CD8-positive, alpha-beta T cell (primary cell): ENCODE measurements at regions of chr13 and their contacts with region 1.

Region 1: DNA sequence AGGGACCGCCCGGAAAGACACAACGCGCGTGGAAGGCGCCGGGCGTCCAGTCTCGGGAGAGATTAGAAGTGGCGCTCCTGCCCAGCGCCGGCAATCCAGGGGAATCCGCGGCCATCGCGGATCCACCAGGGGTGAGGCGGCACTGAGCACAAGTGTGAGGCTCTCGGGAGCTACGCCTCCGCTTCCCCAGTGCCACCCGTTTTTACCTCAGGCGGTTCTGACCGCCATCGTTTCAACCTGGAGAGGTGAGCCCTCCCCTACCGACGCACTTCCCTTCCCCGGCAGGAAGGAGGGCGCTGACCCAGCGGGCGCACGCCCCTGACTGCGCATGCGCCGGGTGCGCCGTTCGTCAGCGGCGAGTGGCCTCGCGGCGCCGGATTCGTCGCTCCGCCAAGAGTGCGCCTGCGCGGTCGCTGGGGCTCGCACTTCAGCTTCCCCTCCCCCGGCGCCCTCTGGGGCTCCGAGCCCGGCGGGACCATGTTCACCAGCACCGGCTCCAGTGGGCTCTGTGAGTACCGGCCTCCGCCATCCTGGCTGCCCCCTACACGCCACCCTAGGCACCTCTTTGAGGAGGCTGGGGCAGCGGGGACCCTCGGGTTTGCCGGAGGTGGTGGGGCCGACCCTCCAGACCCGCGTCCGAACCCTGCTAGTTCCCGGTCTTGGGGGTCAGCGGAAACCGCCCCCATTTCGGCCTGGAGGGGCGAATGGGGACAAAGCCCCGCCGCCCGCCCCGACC is at the start of gene UBAC2:
- DNase-seq: peak; percentile 93 to 99 (median 97)
- ATAC-seq: peak; percentile 77
- H3K4me3 ChIP-seq: peak within 1 kb of the TSS; percentile 77 to 90
- H3K4me3 Mint-ChIP-seq: peak within 1 kb of the TSS; percentile 90
- H3K27ac ChIP-seq: peak within 1 kb of the TSS; percentile 98 to 99
- H3K27ac Mint-ChIP-seq: peak within 1 kb of the TSS; percentile 94
- H3K4me1 ChIP-seq: peaks cover 53% of the 10 kb centered on the region
- H3K4me1 Mint-ChIP-seq: peaks cover 69% of the 10 kb centered on the region
- H3K27me3 ChIP-seq: no peaks in the 10 kb centered on the region
- H3K27me3 Mint-ChIP-seq: no peaks in the 10 kb centered on the region
- CTCF ChIP-seq: no peak
- total RNA-seq, gene UBAC2: 62.0 to 63.0 TPM

Region 2: GRCh38 chr13:99176309-99177276 is 24.0 kb before region 1 on chr13:
- CTCF ChIA-PET with region 1: interaction called, 47 read pairs
- POLR2A ChIA-PET with region 1: interaction called, 5 read pairs
- intact Hi-C with region 1: loop called (anchors 1 to 2 kb)
- DNase-seq: peak; percentile 58 to 87 (median 82)
- ATAC-seq: peak; percentile 93
- H3K4me3 ChIP-seq: peak overlapping the region in 1 of 2 experiments; percentile 25
- H3K4me3 Mint-ChIP-seq: peak overlapping the region; percentile 72
- H3K27ac ChIP-seq: no peak overlapping the region
- H3K27ac Mint-ChIP-seq: peak overlapping the region; percentile 64
- H3K4me1 ChIP-seq: peaks cover 43% of the 10 kb centered on the region
- H3K4me1 Mint-ChIP-seq: peaks cover 45% of the 10 kb centered on the region
- H3K27me3 ChIP-seq: no peaks in the 10 kb centered on the region
- H3K27me3 Mint-ChIP-seq: no peaks in the 10 kb centered on the region
- CTCF ChIP-seq: peak; percentile 80

Region 3: DNA sequence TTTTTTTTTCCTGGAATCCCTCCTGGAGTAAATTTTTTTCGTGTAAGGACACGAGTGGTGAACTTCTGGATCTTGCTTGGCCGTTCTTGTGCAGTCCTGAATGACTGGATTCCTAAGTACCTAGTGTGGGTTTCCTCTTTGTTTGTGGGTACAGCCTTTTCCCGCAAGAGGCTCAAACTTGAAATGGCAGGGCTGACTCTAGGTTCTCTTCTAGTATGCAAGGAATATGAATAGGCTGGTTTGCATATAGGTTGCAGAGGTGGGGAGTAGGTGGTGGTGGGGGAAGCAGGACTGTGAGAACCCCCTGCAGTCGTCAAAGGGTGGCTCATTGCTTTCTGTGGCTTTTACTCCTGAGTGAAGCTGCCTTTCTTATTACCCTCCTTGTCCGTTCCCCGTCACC is 13.6 kb after region 1 on chr13:
- CTCF ChIA-PET with region 1: interaction called, 30 read pairs
- POLR2A ChIA-PET with region 1: interaction called, 38 read pairs
- intact Hi-C with region 1: loop called (anchors 1 kb)
- DNase-seq: peak in 5 of 9 experiments; percentile 33 to 72 (median 60)
- ATAC-seq: peak; percentile 37
- H3K4me3 ChIP-seq: peak overlapping the region; percentile 9 to 65
- H3K4me3 Mint-ChIP-seq: peak overlapping the region; percentile 88
- H3K27ac ChIP-seq: peak overlapping the region; percentile 3 to 78
- H3K27ac Mint-ChIP-seq: peak overlapping the region; percentile 99
- H3K4me1 ChIP-seq: peaks cover 76% of the 10 kb centered on the region
- H3K4me1 Mint-ChIP-seq: peaks cover 81% of the 10 kb centered on the region
- H3K27me3 ChIP-seq: no peaks in the 10 kb centered on the region
- H3K27me3 Mint-ChIP-seq: no peaks in the 10 kb centered on the region
- CTCF ChIP-seq: no peak

Region 4: GRCh38 chr13:99237981-99238662 is 37.5 kb after region 1 on chr13:
- CTCF ChIA-PET with region 1: no interaction called
- POLR2A ChIA-PET with region 1: interaction called, 5 read pairs
- intact Hi-C with region 1: loop called (anchors 2 to 5 kb)
- DNase-seq: peak in 2 of 9 experiments; percentile 55 to 73
- ATAC-seq: peak; percentile 82
- H3K4me3 ChIP-seq: peak overlapping the region; percentile 47 to 49
- H3K4me3 Mint-ChIP-seq: peak overlapping the region; percentile 92
- H3K27ac ChIP-seq: peak overlapping the region; percentile 52 to 82
- H3K27ac Mint-ChIP-seq: peak overlapping the region; percentile 100
- H3K4me1 ChIP-seq: peaks cover 52% of the 10 kb centered on the region
- H3K4me1 Mint-ChIP-seq: peaks cover 73% of the 10 kb centered on the region
- H3K27me3 ChIP-seq: no peaks in the 10 kb centered on the region
- H3K27me3 Mint-ChIP-seq: no peaks in the 10 kb centered on the region
- CTCF ChIP-seq: no peak

Region 5: DNA sequence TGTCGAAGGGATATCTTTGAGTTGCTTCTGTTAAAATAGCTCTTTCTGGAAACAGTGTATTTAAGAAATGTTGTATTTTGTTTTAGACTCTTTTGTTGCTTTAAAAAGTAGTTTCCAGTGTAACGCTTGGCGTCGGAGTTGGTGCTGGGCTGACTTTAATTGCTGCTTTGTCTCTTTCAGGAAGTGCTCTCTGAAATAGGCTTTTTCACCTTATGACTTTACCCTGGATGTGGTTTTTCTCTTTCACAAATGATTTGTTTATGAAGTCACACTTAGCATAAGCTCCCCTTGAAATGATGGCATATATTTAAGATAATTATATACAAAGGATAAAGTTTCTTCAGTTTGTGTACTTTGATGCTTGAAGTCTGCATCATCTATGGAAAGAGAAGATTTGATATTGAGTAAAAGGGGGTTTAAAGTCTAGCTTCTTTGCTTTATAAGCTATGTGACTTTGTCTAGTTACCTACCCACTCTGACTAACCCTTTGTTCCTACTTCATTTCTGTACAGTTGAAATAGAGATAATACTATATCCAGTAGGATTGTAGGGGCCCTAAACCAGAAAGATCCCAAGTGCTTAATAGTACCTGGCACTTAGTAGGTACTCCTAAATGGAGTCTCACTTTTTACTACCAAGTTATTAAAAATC is 57.7 kb after region 1 on chr13 and contains the start of gene GPR18:
- CTCF ChIA-PET with region 1: interaction called, 254 read pairs
- POLR2A ChIA-PET with region 1: interaction called, 53 read pairs
- intact Hi-C with region 1: loop called (anchors 1 kb)
- DNase-seq: peak in 4 of 9 experiments; percentile 41 to 80 (median 53)
- ATAC-seq: peak; percentile 77
- H3K4me3 ChIP-seq: peak within 1 kb of the TSS; percentile 55 to 63
- H3K4me3 Mint-ChIP-seq: peak within 1 kb of the TSS; percentile 91
- H3K27ac ChIP-seq: peak within 1 kb of the TSS; percentile 67 to 82
- H3K27ac Mint-ChIP-seq: peak within 1 kb of the TSS; percentile 94
- H3K4me1 ChIP-seq: peaks cover 63% of the 10 kb centered on the region
- H3K4me1 Mint-ChIP-seq: peaks cover 74% of the 10 kb centered on the region
- H3K27me3 ChIP-seq: no peaks in the 10 kb centered on the region
- H3K27me3 Mint-ChIP-seq: no peaks in the 10 kb centered on the region
- CTCF ChIP-seq: no peak
- total RNA-seq, gene GPR18: 31.9 to 36.2 TPM

Region 6: DNA sequence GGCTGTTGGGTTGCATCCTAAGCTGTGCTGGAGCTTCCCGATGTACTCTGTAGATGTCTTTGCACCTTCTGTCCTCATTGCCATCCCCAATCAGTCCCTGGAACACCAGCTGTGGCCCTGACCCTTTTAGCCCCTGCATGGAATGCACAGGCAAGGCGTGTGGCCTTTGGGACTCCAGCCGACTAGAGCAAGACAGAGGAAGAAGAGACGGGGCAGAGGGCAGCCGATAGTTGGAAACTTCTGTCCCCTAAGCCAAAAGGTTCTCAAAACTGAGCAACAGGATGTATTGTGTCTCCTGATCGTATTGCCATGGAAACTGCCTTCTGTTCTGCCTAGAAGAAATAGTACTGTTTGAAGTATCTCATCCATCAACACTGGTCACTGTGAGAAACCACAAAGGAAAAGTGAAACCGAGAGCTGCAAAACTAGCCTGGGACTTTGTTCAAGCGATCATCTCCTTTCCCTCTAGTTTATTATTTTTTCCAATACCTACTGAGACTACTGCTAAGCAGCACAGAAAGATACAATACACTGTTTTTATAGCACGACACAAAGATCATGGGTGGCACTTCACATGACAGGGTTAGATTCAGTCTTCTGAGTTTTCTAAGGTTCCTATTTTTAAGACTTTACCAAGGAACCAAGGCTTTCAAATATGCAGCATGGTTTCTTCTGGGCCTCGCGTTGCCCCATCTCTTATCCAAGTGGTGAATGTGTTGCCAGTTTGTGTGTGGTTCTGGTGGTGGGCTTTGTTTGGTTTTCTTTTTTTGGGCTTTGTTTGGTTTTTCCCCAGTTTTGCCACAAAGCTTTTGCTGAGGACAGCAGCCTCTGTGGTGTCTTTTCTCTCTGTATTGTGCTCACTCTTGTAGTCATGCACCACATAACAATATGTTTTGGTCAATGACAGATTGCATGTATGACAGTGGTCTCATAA is 155.8 kb after region 1 on chr13:
- CTCF ChIA-PET with region 1: no interaction called
- POLR2A ChIA-PET with region 1: interaction called, 3 read pairs
- intact Hi-C with region 1: loop called in 1 of 2 experiments (anchors 5 kb)
- DNase-seq: peak in 8 of 9 experiments; percentile 41 to 95 (median 66)
- ATAC-seq: peak; percentile 49
- H3K4me3 ChIP-seq: peak overlapping the region in 1 of 2 experiments; percentile 24
- H3K4me3 Mint-ChIP-seq: peak overlapping the region; percentile 55
- H3K27ac ChIP-seq: peak overlapping the region; percentile 81 to 97
- H3K27ac Mint-ChIP-seq: peak overlapping the region; percentile 99
- H3K4me1 ChIP-seq: peaks cover 98% of the 10 kb centered on the region
- H3K4me1 Mint-ChIP-seq: peaks cover 97% of the 10 kb centered on the region
- H3K27me3 ChIP-seq: no peaks in the 10 kb centered on the region
- H3K27me3 Mint-ChIP-seq: no peaks in the 10 kb centered on the region
- CTCF ChIP-seq: no peak